ENCODE measurements at regions of chr3 and their contacts with region 1.

Region 1: GRCh38 chr3:11626084-11626463 is 17.6 kb downstream of the VGLL4 start:
- DNase-seq: peak; percentile 42
- H3K4me3 Mint-ChIP-seq: peak overlapping the region; percentile 39
- H3K27ac Mint-ChIP-seq: peak overlapping the region; percentile 71
- H3K4me1 Mint-ChIP-seq: peaks cover 69% of the 10 kb centered on the region
- H3K27me3 Mint-ChIP-seq: no peaks in the 10 kb centered on the region

Region 2: GRCh38 chr3:10248184-10249080 is 1377.6 kb before region 1 on chr3 and contains the start of gene TATDN2:
- intact Hi-C with region 1: loop called (anchors 5 kb)
- DNase-seq: peak; percentile 93
- H3K4me3 Mint-ChIP-seq: peak within 1 kb of the TSS; percentile 97
- H3K27ac Mint-ChIP-seq: peak within 1 kb of the TSS; percentile 97
- H3K4me1 Mint-ChIP-seq: peaks cover 62% of the 10 kb centered on the region
- H3K27me3 Mint-ChIP-seq: no peaks in the 10 kb centered on the region
- total RNA-seq, gene TATDN2: 80.4 and 81.5 TPM in 2 replicates

Region 3: DNA sequence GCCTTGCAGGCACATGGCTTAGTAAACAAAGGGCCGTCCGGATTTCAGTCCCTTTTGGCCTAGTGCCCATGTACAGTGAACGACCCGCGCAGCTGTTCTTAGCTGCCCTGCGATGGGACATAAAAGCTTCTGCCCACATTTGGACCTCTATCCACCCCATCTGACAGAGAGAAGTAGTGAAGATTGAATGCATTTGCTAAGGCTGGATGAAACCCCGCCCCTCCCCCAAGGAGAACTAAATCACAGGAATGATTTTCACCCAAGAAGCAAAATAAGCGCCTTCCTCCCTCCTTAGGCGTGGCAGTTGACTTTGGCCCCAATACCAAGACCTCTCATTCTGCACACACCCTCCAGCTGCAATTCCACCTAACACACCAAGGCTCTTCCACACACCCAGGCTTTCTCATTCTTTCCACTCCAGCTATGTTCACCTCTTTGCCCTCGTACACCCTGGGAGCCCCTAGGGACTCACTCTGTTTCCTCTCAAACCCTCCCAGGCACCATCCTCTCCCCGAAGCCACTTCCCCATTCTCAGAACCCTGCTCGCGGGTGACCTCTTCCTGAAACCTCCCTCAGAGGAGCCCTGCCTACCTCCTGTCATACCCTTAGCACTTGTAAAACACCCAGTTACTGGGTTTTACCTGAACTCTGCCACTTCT is 485.9 kb before region 1 on chr3:
- intact Hi-C with region 1: loop called (anchors 1 kb)
- DNase-seq: peak; percentile 48
- H3K4me3 Mint-ChIP-seq: peak overlapping the region; percentile 52
- H3K27ac Mint-ChIP-seq: peak overlapping the region; percentile 24
- H3K4me1 Mint-ChIP-seq: peaks cover 22% of the 10 kb centered on the region
- H3K27me3 Mint-ChIP-seq: peaks cover 11% of the 10 kb centered on the region

Region 4: GRCh38 chr3:11434017-11434526 is 192.0 kb before region 1 on chr3:
- intact Hi-C with region 1: no loop called
- DNase-seq: no peak
- H3K4me3 Mint-ChIP-seq: no peak overlapping the region
- H3K27ac Mint-ChIP-seq: no peak overlapping the region
- H3K4me1 Mint-ChIP-seq: no peaks in the 10 kb centered on the region
- H3K27me3 Mint-ChIP-seq: no peaks in the 10 kb centered on the region

Region 5: GRCh38 chr3:11548721-11549131 is 77.3 kb before region 1 on chr3:
- intact Hi-C with region 1: loop called (anchors 2 kb)
- DNase-seq: no peak
- H3K4me3 Mint-ChIP-seq: no peak overlapping the region
- H3K27ac Mint-ChIP-seq: no peak overlapping the region
- H3K4me1 Mint-ChIP-seq: no peaks in the 10 kb centered on the region
- H3K27me3 Mint-ChIP-seq: no peaks in the 10 kb centered on the region

Region 6: GRCh38 chr3:12187448-12188327 is 561.6 kb after region 1 on chr3:
- intact Hi-C with region 1: loop called (anchors 5 kb)
- DNase-seq: peak; percentile 56
- H3K4me3 Mint-ChIP-seq: peak overlapping the region; percentile 21
- H3K27ac Mint-ChIP-seq: peak overlapping the region; percentile 94
- H3K4me1 Mint-ChIP-seq: peaks cover 90% of the 10 kb centered on the region
- H3K27me3 Mint-ChIP-seq: peaks cover under 1% of the 10 kb centered on the region